ENCODE measurements at regions of chr10 and their contacts with region 1.

Region 1: DNA sequence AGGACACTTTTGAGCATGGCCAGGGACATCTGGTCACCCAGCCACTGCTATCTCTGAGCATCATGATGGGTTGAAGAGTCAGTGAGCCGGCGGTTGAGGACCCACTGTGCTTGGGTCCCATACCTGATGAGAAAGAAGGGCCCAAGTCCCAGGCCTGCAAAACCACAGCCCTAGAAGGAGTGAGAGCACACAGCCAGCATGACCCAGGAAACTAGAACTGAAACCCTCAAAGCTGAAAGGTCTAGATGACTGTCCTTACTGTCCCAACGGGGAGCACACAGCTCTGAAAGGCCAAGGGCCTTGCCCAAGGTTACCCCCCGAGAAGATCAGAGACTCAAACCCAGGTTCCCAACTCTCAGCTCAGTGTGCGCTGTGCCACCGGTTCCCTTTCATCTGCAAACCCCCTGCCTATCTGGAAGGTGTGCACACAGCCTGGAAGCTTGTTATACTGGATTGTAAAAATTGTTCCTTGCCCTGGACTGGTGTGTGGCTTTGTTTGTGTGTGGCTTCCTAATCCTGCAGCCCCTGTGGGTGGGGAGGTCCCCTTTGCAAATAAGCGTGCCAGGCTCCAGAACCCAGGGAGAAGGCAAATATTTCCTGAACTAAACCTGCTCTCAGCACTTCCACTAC is 22.6 kb upstream of the PSAP start:
- DNase-seq: peak; percentile 41
- ATAC-seq: peak; percentile 58
- H3K4me3 ChIP-seq: no peak overlapping the region
- H3K4me3 Mint-ChIP-seq: peak overlapping the region; percentile 11
- H3K27ac ChIP-seq: peak overlapping the region; percentile 26 to 63
- H3K27ac Mint-ChIP-seq: peak overlapping the region; percentile 70
- H3K4me1 ChIP-seq: peaks cover 24 to 47% of the 10 kb centered on the region in 2 donors
- H3K4me1 Mint-ChIP-seq: peaks cover 40% of the 10 kb centered on the region
- H3K27me3 ChIP-seq: no peaks in the 10 kb centered on the region
- H3K27me3 Mint-ChIP-seq: no peaks in the 10 kb centered on the region
- CTCF ChIP-seq: no peak

Region 2: DNA sequence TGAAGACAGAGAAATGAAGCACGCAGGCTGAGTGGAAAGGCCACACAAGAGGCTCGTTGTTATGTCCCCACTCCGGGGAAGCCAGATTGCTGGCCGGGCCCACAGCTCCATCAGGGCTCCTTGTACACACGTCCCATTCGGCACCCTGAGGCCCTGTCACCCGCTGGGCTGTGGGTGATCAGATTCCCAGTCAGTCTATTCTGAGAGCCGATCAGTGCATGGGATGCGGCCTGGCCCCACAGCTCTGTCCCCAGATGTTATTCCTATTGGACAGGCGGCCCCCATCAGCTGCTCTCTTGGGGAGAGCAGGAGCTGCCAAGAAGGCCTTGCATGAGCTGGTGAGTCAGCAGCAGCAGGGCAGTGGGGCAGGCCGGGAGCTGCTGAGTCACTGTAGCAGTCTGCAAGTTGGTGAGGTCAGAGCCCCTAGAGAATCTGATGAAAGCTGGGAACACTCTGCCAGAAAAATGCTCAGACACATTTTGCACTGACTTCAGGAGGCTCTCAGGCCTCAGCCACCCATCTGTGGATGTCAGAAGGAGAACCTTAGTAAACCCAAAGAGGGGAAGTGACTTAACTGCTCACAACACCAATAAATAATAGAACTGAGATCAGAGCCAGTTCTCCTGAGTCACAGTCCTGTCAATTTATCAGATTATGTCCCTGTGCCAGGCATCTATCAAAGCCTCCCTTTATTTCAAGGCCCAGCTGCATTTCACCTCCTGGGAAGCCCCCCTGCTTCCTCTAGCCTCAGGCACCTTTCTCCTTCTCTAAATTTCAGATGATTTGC is 13.3 kb before region 1 on chr10:
- CTCF ChIA-PET with region 1: interaction called, 11 read pairs
- POLR2A ChIA-PET with region 1: interaction called, 3 read pairs
- intact Hi-C with region 1: no loop called
- DNase-seq: peak; percentile 47
- ATAC-seq: peak; percentile 68
- H3K4me3 ChIP-seq: no peak overlapping the region
- H3K4me3 Mint-ChIP-seq: peak overlapping the region; percentile 42
- H3K27ac ChIP-seq: peak overlapping the region in 1 of 2 donors; percentile 23
- H3K27ac Mint-ChIP-seq: peak overlapping the region; percentile 72
- H3K4me1 ChIP-seq: peaks cover 20 to 28% of the 10 kb centered on the region in 2 donors
- H3K4me1 Mint-ChIP-seq: peaks cover 28% of the 10 kb centered on the region
- H3K27me3 ChIP-seq: no peaks in the 10 kb centered on the region
- H3K27me3 Mint-ChIP-seq: no peaks in the 10 kb centered on the region
- CTCF ChIP-seq: no peak

Region 3: GRCh38 chr10:71888623-71889387 is 15.1 kb after region 1 on chr10:
- CTCF ChIA-PET with region 1: no interaction called
- POLR2A ChIA-PET with region 1: interaction called, 3 read pairs
- intact Hi-C with region 1: loop called (anchors 1 kb)
- DNase-seq: peak; percentile 96
- ATAC-seq: peak; percentile 95
- H3K4me3 ChIP-seq: peak overlapping the region; percentile 36 to 66 (median 54)
- H3K4me3 Mint-ChIP-seq: peak overlapping the region; percentile 87
- H3K27ac ChIP-seq: peak overlapping the region; percentile 71 to 77
- H3K27ac Mint-ChIP-seq: peak overlapping the region; percentile 92
- H3K4me1 ChIP-seq: peaks cover 33 to 40% of the 10 kb centered on the region in 2 donors
- H3K4me1 Mint-ChIP-seq: peaks cover 36% of the 10 kb centered on the region
- H3K27me3 ChIP-seq: no peaks in the 10 kb centered on the region
- H3K27me3 Mint-ChIP-seq: no peaks in the 10 kb centered on the region
- CTCF ChIP-seq: peak; percentile 16

Region 4: GRCh38 chr10:72088889-72089575 is 215.3 kb after region 1 on chr10:
- CTCF ChIA-PET with region 1: no interaction called
- POLR2A ChIA-PET with region 1: no interaction called
- intact Hi-C with region 1: no loop called
- DNase-seq: no peak
- ATAC-seq: no peak
- H3K4me3 ChIP-seq: peak overlapping the region in 4 of 5 experiments; percentile 79 to 93 (median 88)
- H3K4me3 Mint-ChIP-seq: peak overlapping the region; percentile 100
- H3K27ac ChIP-seq: peak overlapping the region; percentile 89 to 92
- H3K27ac Mint-ChIP-seq: peak overlapping the region; percentile 100
- H3K4me1 ChIP-seq: peaks cover 24 to 33% of the 10 kb centered on the region in 2 donors
- H3K4me1 Mint-ChIP-seq: peaks cover 47% of the 10 kb centered on the region
- H3K27me3 ChIP-seq: no peaks in the 10 kb centered on the region
- H3K27me3 Mint-ChIP-seq: no peaks in the 10 kb centered on the region
- CTCF ChIP-seq: no peak

Measured in B cell (primary cell).